Prostate gland (tissue), 2 donors: ENCODE measurements at regions of chr16 and their contacts with region 1.

Region 1: GRCh38 chr16:30902029-30902972 is 5.9 kb downstream of the CTF1 start:
- DNase-seq: peak; percentile 48
- H3K4me3 ChIP-seq: peak overlapping the region; percentile 39 to 50
- H3K27ac ChIP-seq: peak overlapping the region; percentile 86
- H3K4me1 ChIP-seq: peaks cover 3% of the 10 kb centered on the region
- H3K27me3 ChIP-seq: no peaks in the 10 kb centered on the region
- CTCF ChIP-seq: peak in 3 of 4 experiments; percentile 18 to 63 (median 21)
- POLR2A ChIP-seq: no peak

Region 2: GRCh38 chr16:30844671-30845449 is 57.4 kb before region 1 on chr16:
- intact Hi-C with region 1: loop called (anchors 1 kb)
- DNase-seq: peak; percentile 78
- H3K4me3 ChIP-seq: no peak overlapping the region
- H3K27ac ChIP-seq: peak overlapping the region; percentile 31 to 38
- H3K4me1 ChIP-seq: peaks cover 3% of the 10 kb centered on the region
- H3K27me3 ChIP-seq: no peaks in the 10 kb centered on the region
- CTCF ChIP-seq: peak in 3 of 4 experiments; percentile 79 to 85 (median 79)
- POLR2A ChIP-seq: no peak

Region 3: DNA sequence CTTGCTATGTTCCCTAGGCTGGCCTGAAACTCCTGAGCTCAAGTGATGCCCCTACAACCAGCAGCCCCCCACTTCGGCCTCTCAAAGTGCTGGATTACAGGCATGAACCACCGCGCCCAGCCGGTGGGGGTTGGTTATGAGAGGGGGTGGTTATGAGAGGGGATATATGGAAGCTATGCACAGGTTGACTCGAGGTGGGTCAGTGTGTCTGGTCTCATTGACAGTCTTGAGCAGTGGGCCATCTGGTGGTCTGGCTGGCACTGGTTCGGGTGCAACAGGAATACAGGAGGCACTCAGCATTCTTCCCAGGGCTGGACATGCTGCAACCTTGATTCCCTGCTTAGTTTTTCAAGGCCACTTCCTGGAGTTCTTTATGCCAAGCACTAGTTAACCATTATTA is 113.7 kb after region 1 on chr16:
- intact Hi-C with region 1: no loop called
- DNase-seq: no peak
- H3K4me3 ChIP-seq: no peak overlapping the region
- H3K27ac ChIP-seq: no peak overlapping the region
- H3K4me1 ChIP-seq: no peaks in the 10 kb centered on the region
- H3K27me3 ChIP-seq: peaks cover 3% of the 10 kb centered on the region
- CTCF ChIP-seq: no peak
- POLR2A ChIP-seq: no peak